Activated T-helper 1 cell treated with anti-CD3 and anti-CD28 coated beads, Interleukin-12 subunit alpha, Interleukin-12 subunit beta, Interleukin-2, Interleukin-4 antibody, amounts not matched to agents 30 ng/mL and 10 ng/mL and 1 ng/mL, durations not matched to agents 14 hours and 24 hours and 36 hours (primary cell): ENCODE measurements at regions of chr7 and their contacts with region 1.

Region 1: DNA sequence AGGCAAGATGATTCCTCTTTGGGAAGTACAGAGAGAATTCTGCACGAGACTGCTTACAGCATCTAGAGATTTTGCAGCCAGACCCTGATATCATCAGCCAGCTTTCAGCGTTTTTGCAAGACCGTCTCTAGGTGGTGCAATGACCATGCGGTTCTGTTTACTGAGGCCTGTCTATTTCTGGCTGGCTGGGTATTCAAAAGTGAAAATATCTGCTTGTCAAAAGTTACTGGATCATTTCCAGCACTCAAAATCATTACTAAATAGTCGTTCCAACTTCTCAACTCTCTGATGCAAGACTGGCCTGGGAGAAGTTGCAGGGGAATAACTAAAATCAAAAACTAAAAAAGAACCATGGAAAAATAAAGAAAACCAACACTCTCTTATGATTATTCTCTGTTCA is 240.1 kb downstream of the ELMO1 start:
- DNase-seq: no peak
- H3K4me3 Mint-ChIP-seq: no peak overlapping the region
- H3K27ac Mint-ChIP-seq: no peak overlapping the region
- H3K4me1 Mint-ChIP-seq: peaks cover 15% of the 10 kb centered on the region
- H3K27me3 Mint-ChIP-seq: no peaks in the 10 kb centered on the region

Region 2: DNA sequence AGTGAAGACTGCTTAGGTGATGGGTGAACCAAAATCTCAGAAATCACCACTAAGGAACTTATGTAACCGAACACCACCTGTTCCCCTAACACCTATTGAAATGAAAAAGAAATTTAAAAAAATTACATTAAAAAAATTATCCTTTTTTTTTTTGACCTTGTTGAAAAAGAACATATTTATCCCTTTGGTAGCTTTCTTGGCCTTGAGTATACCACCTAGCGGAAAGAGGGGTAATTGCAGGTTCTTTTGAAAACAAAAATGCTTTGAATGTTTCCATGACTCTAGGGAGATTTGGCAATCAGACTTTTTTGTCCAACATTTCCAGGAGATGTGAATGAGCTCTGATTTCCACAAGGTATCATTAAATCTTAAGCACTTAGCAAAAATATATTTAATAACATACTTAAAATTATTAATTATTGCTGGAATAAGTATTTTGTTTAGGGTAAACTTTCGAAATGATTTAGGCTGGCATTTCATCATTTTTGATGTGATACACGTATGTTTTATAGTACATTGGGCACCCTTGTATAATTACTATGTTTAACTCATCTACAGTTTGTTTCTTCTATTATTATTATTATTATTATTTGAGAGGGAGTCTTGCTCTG is 287.2 kb after region 1 on chr7:
- intact Hi-C with region 1: loop called (anchors 1 kb)
- DNase-seq: no peak
- H3K4me3 Mint-ChIP-seq: no peak overlapping the region
- H3K27ac Mint-ChIP-seq: no peak overlapping the region
- H3K4me1 Mint-ChIP-seq: peaks cover 10% of the 10 kb centered on the region
- H3K27me3 Mint-ChIP-seq: no peaks in the 10 kb centered on the region

Region 3: GRCh38 chr7:37601321-37601720 is 392.8 kb after region 1 on chr7:
- intact Hi-C with region 1: no loop called
- DNase-seq: no peak
- H3K4me3 Mint-ChIP-seq: no peak overlapping the region
- H3K27ac Mint-ChIP-seq: no peak overlapping the region
- H3K4me1 Mint-ChIP-seq: no peaks in the 10 kb centered on the region
- H3K27me3 Mint-ChIP-seq: peaks cover 8% of the 10 kb centered on the region

Region 4: DNA sequence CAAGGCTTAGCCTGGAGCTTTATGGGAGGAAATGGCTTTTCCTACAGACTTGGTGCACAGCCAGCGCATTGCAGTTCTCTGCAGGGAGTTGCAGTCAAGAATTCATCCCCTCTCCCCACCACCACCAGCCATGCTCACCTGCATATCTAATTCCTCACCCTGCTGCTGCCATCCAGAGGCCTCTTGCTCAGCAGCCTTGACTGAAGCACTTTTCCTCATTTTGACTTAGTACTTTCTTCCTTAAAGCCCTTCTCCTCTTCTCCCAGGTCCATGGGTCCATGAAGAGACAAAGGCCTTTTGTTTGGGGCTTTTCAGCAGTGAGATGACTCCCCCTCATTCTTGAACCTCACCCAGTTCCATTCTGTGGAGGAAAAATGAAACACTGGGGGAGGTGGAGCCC is 435.3 kb after region 1 on chr7:
- intact Hi-C with region 1: no loop called
- DNase-seq: no peak
- H3K4me3 Mint-ChIP-seq: no peak overlapping the region
- H3K27ac Mint-ChIP-seq: no peak overlapping the region
- H3K4me1 Mint-ChIP-seq: no peaks in the 10 kb centered on the region
- H3K27me3 Mint-ChIP-seq: peaks cover 4% of the 10 kb centered on the region

Region 5: DNA sequence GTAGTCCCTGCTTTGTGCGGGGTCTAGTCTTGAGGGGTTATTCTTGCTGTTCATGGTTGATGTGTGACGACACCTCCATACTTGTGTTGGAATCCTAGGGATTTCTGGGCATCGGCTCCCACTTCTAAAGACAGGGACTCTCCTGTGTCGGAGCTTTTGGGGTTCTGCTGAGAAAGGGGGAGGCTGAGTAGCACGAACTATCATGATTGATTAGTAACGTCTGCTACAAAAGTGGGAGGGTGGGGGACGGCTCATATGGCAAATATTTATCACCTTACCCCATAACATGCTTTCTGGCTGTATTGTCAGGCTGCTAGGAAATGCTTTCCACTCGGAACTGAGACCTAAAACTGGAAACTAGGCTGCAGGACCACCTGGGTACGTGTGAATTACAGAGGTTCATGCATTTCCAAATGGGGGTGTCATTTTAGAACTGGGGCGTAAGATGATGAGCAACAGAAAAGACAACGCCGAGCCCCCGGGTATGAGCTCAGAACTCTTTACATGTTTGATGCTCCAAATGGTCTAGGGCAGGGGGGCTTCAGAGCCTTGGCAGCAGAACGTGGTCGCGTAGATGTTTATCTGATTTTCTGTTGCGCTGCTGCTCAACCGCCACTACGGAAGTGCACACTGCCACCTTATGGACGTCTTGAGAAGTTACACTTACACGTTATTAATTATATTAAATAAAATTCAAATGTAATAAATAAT is 624.7 kb after region 1 on chr7:
- intact Hi-C with region 1: loop called (anchors 5 kb)
- DNase-seq: no peak
- H3K4me3 Mint-ChIP-seq: peak overlapping the region; percentile 72
- H3K27ac Mint-ChIP-seq: no peak overlapping the region
- H3K4me1 Mint-ChIP-seq: peaks cover 10% of the 10 kb centered on the region
- H3K27me3 Mint-ChIP-seq: peaks cover 12% of the 10 kb centered on the region